Posterior cingulate gyrus (tissue), 11 donors: ENCODE measurements at regions of chr2 and their contacts with region 1.

Region 1: GRCh38 chr2:21256006-21256405 is 132.2 kb downstream of the TDRD15 start:
- DNase-seq: peak in 7 of 10 donors; percentile 55 to 94 (median 67)

Region 2: DNA sequence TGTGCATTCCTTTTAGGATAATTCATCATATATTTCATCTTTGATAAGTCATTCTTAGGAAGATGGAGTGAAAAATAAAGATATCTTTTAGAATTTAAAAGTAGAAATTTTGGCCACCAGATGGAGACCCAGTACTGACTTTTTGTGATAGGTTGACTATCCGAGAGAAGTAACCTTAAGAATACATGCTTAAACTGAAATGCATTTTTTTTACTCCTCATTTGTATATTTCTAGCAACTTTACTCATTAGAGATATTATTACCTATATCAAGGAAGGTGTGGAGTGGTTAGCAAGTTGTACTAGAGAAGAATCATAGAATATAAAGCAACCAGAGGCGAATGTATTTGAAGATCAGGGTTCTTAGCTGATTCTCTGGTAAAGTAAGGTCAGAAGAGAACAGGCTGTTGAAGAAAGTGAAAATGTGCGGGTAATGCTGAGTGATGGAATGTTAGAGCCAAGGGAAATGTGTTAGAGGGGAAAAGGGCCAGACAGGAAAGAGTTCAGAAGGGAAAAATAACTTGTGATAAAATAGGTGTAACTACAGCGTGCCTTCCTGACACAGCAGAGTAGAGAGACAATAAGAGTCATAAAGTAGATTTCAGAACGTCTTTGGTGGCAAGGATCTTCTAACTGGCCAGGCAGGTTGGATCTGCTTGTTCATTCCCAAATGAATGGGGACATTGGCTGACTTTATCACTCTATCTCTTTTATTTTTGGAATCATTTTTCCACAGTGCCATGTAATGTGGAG is 79.9 kb before region 1 on chr2:
- intact Hi-C with region 1: loop called (anchors 5 kb)
- DNase-seq: no peak